ENCODE measurements at regions of chr11 and their contacts with region 1.

Region 1: DNA sequence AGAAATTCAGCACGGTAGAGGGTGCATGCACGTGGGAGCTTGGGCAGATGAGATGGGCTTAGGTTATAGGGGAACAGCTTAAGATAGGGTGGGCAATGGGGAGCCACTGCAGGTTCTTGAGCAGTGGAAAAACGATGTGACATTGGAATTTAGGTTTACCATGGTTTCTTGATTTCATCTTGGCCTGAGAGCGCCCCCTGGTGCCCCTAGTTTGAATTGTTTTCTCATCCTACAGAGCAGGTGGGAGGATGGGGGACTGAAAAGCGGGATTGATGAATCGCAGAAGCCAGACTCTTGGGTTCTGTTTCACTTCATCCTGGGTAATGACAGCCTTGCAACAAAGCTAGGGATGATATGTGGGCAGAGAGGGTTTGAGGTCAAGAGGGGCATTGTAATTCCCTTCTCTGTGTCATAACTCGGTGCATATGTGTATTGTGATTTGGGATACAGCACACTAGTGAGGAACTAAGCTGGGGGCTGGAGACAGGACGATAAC is 6.7 kb upstream of the MCAM start:
- DNase-seq: peak; percentile 80
- H3K4me3 Mint-ChIP-seq: no peak overlapping the region
- H3K27ac Mint-ChIP-seq: no peak overlapping the region
- H3K4me1 Mint-ChIP-seq: peaks cover 13% of the 10 kb centered on the region
- H3K27me3 Mint-ChIP-seq: no peaks in the 10 kb centered on the region
- CTCF ChIP-seq: peak; percentile 65

Region 2: DNA sequence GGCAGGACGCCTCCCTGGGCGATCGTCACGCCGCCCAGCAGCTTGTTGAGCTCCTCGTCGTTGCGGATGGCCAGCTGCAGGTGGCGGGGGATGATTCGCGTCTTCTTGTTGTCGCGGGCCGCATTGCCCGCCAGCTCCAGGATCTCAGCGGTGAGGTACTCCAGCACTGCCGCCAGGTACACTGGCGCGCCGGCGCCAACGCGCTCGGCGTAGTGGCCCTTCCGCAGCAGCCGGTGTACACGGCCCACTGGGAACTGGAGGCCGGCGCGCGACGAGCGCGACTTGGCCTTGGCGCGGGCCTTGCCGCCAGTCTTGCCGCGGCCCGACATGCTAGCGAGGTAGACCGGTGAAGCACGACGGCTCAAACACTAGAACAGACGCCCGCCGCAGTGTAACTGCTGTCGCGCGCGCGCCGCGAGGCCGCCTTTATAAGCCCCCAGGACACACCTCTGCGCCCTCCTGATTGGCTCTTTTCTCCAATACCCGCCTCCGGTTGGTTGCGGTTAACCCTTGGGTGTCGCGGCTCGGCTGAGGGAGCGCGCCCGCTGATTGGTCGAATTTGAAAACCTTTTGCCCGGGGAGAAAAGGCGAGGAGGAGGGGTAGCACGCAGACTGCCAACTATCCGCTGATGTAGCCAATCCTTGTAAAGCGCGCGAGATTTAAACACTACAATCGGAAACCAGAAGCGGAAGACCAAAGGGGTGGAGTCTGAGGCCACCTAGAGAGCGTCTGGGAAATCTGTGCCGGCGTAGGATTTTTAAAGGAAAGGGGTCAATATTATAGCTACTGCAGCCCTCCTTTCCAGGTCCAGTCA is 228.3 kb before region 1 on chr11:
- CTCF ChIA-PET with region 1: interaction called, 4 read pairs
- POLR2A ChIA-PET with region 1: interaction called, 3 read pairs
- intact Hi-C with region 1: loop called (anchors 1 kb)
- DNase-seq: peak; percentile 100
- H3K4me3 Mint-ChIP-seq: peak overlapping the region; percentile 89
- H3K27ac Mint-ChIP-seq: peak overlapping the region; percentile 89
- H3K4me1 Mint-ChIP-seq: peaks cover 26% of the 10 kb centered on the region
- H3K27me3 Mint-ChIP-seq: no peaks in the 10 kb centered on the region
- CTCF ChIP-seq: peak; percentile 1

Region 3: DNA sequence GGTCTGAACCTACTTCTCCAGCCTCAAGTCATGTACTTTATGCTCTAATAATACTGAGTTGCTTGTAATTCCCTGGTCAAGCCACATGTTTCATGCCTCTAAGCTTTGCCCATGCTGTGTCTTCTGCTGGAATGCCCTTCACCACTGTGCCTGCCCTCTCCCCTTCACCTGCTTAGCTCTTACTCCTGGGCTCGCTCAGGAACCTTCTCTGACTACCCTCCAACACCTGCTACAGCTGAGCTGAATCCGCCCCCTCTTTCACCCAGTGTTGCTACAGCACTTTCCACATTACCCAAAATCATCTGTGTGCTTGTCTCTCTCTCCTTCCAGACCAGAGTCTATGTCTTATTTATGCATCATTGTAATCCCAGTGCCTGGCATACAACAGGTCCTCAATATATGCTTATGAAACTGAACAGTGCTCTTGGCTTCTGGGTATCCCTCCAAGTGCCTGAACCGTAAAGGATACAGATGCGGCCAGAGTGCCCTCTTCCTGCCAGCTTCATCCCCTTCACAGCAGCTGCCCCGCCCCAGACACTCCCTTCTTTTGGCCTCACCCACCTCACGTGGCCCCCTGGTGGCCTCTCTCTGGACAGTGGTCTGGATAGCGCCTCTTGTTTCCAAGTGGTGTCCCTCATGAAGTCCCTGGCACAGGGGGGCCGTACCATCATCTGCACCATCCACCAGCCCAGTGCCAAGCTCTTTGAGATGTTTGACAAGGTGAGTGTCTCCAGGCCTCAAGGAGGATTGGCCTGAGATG is 167.7 kb before region 1 on chr11:
- CTCF ChIA-PET with region 1: interaction called, 10 read pairs
- POLR2A ChIA-PET with region 1: no interaction called
- intact Hi-C with region 1: no loop called
- DNase-seq: peak; percentile 46
- H3K4me3 Mint-ChIP-seq: no peak overlapping the region
- H3K27ac Mint-ChIP-seq: no peak overlapping the region
- H3K4me1 Mint-ChIP-seq: peaks cover 5% of the 10 kb centered on the region
- H3K27me3 Mint-ChIP-seq: peaks cover 10% of the 10 kb centered on the region
- CTCF ChIP-seq: no peak

Region 4: GRCh38 chr11:119306373-119306890 is 17.2 kb before region 1 on chr11:
- CTCF ChIA-PET with region 1: interaction called, 62 read pairs
- POLR2A ChIA-PET with region 1: interaction called, 3 read pairs
- intact Hi-C with region 1: no loop called
- DNase-seq: peak; percentile 40
- H3K4me3 Mint-ChIP-seq: no peak overlapping the region
- H3K27ac Mint-ChIP-seq: no peak overlapping the region
- H3K4me1 Mint-ChIP-seq: peaks cover 10% of the 10 kb centered on the region
- H3K27me3 Mint-ChIP-seq: no peaks in the 10 kb centered on the region
- CTCF ChIP-seq: no peak

Region 5: GRCh38 chr11:119356349-119357031 is 32.9 kb after region 1 on chr11:
- CTCF ChIA-PET with region 1: interaction called, 36 read pairs
- POLR2A ChIA-PET with region 1: interaction called, 5 read pairs
- intact Hi-C with region 1: no loop called
- DNase-seq: peak; percentile 80
- H3K4me3 Mint-ChIP-seq: peak overlapping the region; percentile 79
- H3K27ac Mint-ChIP-seq: no peak overlapping the region
- H3K4me1 Mint-ChIP-seq: peaks cover 41% of the 10 kb centered on the region
- H3K27me3 Mint-ChIP-seq: no peaks in the 10 kb centered on the region
- CTCF ChIP-seq: peak; percentile 92

Region 6: DNA sequence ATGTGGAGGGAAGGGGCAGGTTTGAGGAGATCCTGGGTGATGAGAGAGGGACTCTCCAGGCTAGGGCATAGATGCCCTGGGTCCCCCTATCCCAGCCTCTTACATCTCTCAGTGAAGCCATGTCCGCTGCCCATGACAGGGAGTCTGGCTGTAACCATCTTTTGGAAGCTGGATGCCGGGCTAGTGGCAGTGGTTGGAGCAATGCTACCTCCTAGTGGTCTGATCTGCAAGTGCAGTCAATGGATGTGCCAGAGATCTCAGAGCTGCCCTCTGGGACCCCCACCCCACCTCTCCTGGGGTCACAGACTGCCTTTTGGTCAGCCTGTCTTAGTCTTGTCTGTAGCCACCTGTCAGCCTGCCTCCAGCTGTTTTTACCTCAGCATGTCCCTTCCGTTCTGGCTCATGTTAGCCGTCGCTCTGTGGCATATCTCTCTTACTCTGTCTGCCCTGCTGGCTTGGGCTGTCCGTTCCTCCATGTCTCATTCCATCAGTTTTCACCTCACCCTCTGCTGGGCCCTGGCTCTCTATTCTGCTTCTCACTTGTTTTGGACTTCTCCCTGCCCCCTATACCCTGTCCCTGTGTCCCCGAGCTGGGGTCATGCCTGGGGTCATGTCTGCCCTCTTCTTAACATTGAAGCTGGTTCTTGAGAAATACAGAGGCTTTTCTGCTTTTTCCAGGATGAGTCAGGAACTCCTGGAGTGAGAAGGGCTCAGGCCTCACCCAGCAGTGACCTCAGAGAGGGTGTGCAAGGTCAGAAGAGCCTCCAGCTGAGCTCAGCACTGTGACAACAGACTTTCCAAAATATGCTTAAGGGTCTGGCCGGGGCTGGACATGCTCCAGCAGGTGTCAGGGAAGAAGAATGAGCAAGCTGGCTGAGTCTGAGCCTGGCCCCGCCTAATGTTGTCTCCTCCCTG is 151.4 kb after region 1 on chr11:
- CTCF ChIA-PET with region 1: interaction called, 9 read pairs
- POLR2A ChIA-PET with region 1: no interaction called
- intact Hi-C with region 1: loop called (anchors 1 kb)
- DNase-seq: peak; percentile 81
- H3K4me3 Mint-ChIP-seq: peak overlapping the region; percentile 7
- H3K27ac Mint-ChIP-seq: peak overlapping the region; percentile 57
- H3K4me1 Mint-ChIP-seq: peaks cover 27% of the 10 kb centered on the region
- H3K27me3 Mint-ChIP-seq: peaks cover 11% of the 10 kb centered on the region
- CTCF ChIP-seq: peak; percentile 94